ENCODE measurements at regions of chr7 and their contacts with region 1.

Region 1: GRCh38 chr7:139016931-139017511 is 18.8 kb downstream of the ZC3HAV1L start:
- DNase-seq: peak; percentile 77
- ATAC-seq: peak; percentile 96
- H3K4me3 Mint-ChIP-seq: no peak overlapping the region
- H3K27ac Mint-ChIP-seq: no peak overlapping the region
- H3K4me1 Mint-ChIP-seq: peaks cover 7% of the 10 kb centered on the region
- H3K27me3 Mint-ChIP-seq: peaks cover 22% of the 10 kb centered on the region

Region 2: DNA sequence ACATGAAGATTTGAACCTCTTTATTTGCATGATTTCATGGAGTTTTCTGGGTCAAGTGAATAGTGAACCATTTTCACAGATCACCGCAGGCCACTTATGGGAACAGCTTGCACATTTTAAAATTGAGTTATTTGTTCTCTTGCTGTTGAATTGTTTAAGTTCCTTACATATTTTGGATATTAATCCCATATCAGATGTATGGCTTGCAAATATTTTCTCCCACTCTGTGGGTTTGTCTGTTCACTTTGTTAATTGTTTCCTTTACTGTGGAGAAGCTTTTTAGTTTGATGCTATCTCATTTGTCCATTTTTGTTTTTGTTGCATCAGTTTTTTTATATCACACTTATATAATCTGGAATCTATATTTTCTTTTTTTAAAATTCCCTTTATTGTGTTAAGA is 32.9 kb after region 1 on chr7:
- CTCF ChIA-PET with region 1: interaction called, 22 read pairs
- DNase-seq: no peak
- ATAC-seq: no peak
- H3K4me3 Mint-ChIP-seq: no peak overlapping the region
- H3K27ac Mint-ChIP-seq: peak overlapping the region; percentile 50
- H3K4me1 Mint-ChIP-seq: peaks cover 74% of the 10 kb centered on the region
- H3K27me3 Mint-ChIP-seq: no peaks in the 10 kb centered on the region

Region 3: DNA sequence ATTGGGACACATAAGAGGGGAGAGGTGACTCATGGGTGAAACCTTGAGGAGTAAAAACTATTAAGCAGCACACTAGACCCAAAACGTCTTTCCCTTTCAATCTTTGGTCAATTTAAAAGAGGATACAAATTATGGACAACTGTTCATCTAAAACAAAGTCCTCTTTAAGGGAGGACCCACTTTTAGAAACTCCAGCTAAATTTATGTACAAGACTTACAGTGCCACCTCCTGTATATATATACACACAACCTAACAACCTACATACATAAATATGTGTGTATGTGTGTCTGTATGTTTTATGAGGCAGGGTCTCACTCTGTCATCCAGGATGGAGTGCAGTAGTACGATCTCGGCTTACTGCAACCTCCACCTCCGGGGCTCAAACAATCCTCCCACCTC is 110.6 kb after region 1 on chr7:
- CTCF ChIA-PET with region 1: interaction called, 12 read pairs
- DNase-seq: no peak
- ATAC-seq: peak; percentile 57
- H3K4me3 Mint-ChIP-seq: no peak overlapping the region
- H3K27ac Mint-ChIP-seq: no peak overlapping the region
- H3K4me1 Mint-ChIP-seq: peaks cover 30% of the 10 kb centered on the region
- H3K27me3 Mint-ChIP-seq: peaks cover 4% of the 10 kb centered on the region

Region 4: GRCh38 chr7:139133335-139134139 is 116.5 kb after region 1 on chr7:
- CTCF ChIA-PET with region 1: interaction called, 12 read pairs
- DNase-seq: peak; percentile 92
- ATAC-seq: peak; percentile 99
- H3K4me3 Mint-ChIP-seq: peak overlapping the region; percentile 78
- H3K27ac Mint-ChIP-seq: peak overlapping the region; percentile 66
- H3K4me1 Mint-ChIP-seq: peaks cover 18% of the 10 kb centered on the region
- H3K27me3 Mint-ChIP-seq: peaks cover 2% of the 10 kb centered on the region